Right lobe of liver (tissue), 6 donors: ENCODE measurements at regions of chr22 and their contacts with region 1.

Region 1: GRCh38 chr22:50326959-50327710 is at the start of gene DENND6B:
- DNase-seq: peak; percentile 83 to 84 (median 84)
- ATAC-seq: peak; percentile 82 to 97 (median 93)
- H3K4me3 ChIP-seq: peak within 1 kb of the TSS; percentile 85 to 92 (median 92)
- H3K27ac ChIP-seq: peak within 1 kb of the TSS; percentile 88 to 93 (median 91)
- H3K4me1 ChIP-seq: peaks cover 0 to 12% (median 4%) of the 10 kb centered on the region in 4 donors
- H3K27me3 ChIP-seq: no peaks in the 10 kb centered on the region
- CTCF ChIP-seq: peak; percentile 37 to 95 (median 67)
- POLR2A ChIP-seq: peak; percentile 72
- total RNA-seq, gene DENND6B: 0.98 to 4.1 (median 1.9) TPM

Region 2: DNA sequence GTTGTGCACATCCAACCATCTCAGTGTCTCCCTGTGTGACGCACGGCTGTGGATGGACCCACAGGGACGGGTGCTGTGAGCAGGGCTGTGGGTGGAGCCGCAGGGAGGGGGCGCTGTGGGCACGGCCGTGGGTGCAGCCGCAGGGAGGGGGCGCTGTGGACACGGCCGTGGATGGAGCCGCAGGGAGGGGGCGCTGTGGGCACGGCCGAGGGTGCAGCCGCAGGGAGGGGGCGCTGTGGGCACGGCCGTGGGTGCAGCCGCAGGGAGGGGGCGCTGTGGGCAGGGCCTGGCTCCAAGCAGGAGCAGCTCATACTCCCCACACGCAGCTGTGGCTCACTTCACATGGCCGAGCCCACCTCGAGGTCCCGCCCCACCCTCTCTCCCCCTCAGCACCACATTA is 51.0 kb before region 1 on chr22:
- intact Hi-C with region 1: loop called (anchors 5 to 10 kb)
- DNase-seq: peak; percentile 77 to 80 (median 79)
- ATAC-seq: peak; percentile 58 to 68 (median 62)
- H3K4me3 ChIP-seq: no peak overlapping the region
- H3K27ac ChIP-seq: no peak overlapping the region
- H3K4me1 ChIP-seq: peaks cover 3 to 19% (median 4%) of the 10 kb centered on the region in 4 donors
- H3K27me3 ChIP-seq: no peaks in the 10 kb centered on the region
- CTCF ChIP-seq: peak; percentile 35 to 70 (median 48)
- POLR2A ChIP-seq: no peak